ENCODE measurements at regions of chr2 and their contacts with region 1.

Region 1: DNA sequence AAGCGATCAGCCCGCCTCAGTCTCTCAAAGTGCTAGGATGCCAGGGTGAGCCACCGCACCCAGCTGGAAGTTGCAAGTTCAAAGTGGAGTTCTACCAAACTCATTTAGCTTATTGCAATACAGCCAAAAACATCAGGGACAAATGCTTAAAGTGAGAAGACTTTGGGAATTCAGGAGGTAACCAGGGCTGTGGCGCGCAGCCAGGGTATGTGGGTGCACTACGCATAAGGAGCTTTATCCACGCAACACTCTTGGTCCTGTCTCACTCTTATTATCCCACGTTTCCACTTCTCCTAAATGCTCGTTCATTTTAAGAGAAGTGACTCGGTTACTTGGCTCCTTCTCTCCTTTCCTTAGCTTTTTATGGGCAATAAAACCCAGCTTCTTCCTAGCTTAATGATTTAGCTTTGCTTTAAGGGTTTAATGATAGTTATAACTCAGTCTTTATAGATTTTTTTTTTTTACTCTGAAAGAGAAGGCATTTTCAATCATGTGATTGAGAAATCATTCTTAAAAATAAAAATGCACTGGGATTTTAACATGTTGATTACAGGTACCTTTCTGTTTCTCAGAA is 199.8 kb downstream of the KCNE4 start:
- DNase-seq: no peak
- H3K4me3 Mint-ChIP-seq: no peak overlapping the region
- H3K27ac Mint-ChIP-seq: no peak overlapping the region
- H3K4me1 Mint-ChIP-seq: no peaks in the 10 kb centered on the region
- H3K27me3 Mint-ChIP-seq: no peaks in the 10 kb centered on the region
- CTCF ChIP-seq: no peak

Region 2: GRCh38 chr2:223613017-223613950 is 361.5 kb after region 1 on chr2:
- CTCF ChIA-PET with region 1: no interaction called
- intact Hi-C with region 1: loop called (anchors 10 kb)
- DNase-seq: peak; percentile 74
- H3K4me3 Mint-ChIP-seq: peak overlapping the region; percentile 60
- H3K27ac Mint-ChIP-seq: peak overlapping the region; percentile 55
- H3K4me1 Mint-ChIP-seq: no peaks in the 10 kb centered on the region
- H3K27me3 Mint-ChIP-seq: no peaks in the 10 kb centered on the region
- CTCF ChIP-seq: no peak

Region 3: GRCh38 chr2:223860809-223861738 is 609.3 kb after region 1 on chr2:
- CTCF ChIA-PET with region 1: no interaction called
- intact Hi-C with region 1: no loop called
- DNase-seq: peak; percentile 90
- H3K4me3 Mint-ChIP-seq: peak overlapping the region; percentile 61
- H3K27ac Mint-ChIP-seq: peak overlapping the region; percentile 96
- H3K4me1 Mint-ChIP-seq: peaks cover 69% of the 10 kb centered on the region
- H3K27me3 Mint-ChIP-seq: no peaks in the 10 kb centered on the region
- CTCF ChIP-seq: no peak

Measured in Calu3 (cell line).